ENCODE measurements at regions of chr20 and their contacts with region 1.

Region 1: DNA sequence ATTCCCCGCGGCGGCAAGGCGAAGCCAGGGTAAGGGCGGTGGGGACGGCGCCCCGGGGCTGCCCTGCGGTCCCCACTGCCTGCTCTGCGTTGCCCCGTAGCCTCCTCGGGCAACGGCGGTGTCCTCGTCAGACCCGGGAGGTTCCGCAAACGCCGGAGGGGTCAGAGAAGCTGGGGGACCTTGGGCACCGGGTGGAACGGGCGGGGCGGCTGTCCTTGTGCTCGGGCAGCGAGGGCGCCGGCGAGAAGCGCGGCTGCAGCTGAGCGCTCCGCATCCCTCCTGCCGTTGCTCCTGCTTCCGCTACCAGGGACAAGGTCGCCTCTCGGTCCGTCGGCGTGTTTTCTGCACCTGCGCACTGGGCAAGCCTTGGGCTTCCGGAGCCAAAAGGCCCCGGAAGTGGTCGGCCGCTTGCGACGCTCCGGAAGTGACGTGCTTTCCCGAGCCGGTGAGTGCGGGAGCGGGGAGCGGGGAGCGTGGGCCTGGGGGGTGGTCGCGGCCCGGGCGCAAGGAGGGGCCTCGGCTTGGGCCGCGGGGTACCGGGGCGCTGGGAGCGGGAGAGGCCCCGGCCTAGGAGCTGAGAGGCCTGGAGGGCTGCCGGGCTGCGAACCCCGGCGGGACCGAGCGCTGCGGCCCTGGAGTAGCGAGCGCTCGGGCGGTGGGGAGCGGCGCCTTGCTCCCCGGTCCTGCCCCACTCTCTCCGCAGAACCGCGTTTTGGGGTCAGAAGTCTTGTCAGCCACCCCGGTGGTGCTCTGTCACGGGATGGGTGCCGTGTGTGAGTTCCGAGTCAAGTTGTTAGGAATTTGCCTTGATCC is at the start of gene MTG2:
- DNase-seq: peak; percentile 85 to 98 (median 92)
- ATAC-seq: peak; percentile 94
- H3K4me3 ChIP-seq: peak within 1 kb of the TSS; percentile 78
- H3K4me3 Mint-ChIP-seq: peak within 1 kb of the TSS; percentile 98
- H3K27ac ChIP-seq: peak within 1 kb of the TSS; percentile 78 to 83
- H3K27ac Mint-ChIP-seq: peak within 1 kb of the TSS; percentile 97
- H3K4me1 ChIP-seq: peaks cover 22% of the 10 kb centered on the region
- H3K4me1 Mint-ChIP-seq: peaks cover 49% of the 10 kb centered on the region
- H3K27me3 ChIP-seq: no peaks in the 10 kb centered on the region
- H3K27me3 Mint-ChIP-seq: no peaks in the 10 kb centered on the region
- CTCF ChIP-seq: no peak
- total RNA-seq, gene MTG2: 9.5 to 9.9 TPM

Region 2: GRCh38 chr20:62065669-62066338 is 117.0 kb before region 1 on chr20 and contains the start of gene TAF4:
- CTCF ChIA-PET with region 1: no interaction called
- POLR2A ChIA-PET with region 1: interaction called, 8 read pairs
- intact Hi-C with region 1: loop called in 1 of 2 experiments (anchors 2 kb)
- DNase-seq: peak; percentile 58 to 95 (median 80)
- ATAC-seq: peak; percentile 74
- H3K4me3 ChIP-seq: peak within 1 kb of the TSS; percentile 77
- H3K4me3 Mint-ChIP-seq: peak within 1 kb of the TSS; percentile 96
- H3K27ac ChIP-seq: peak within 1 kb of the TSS; percentile 15 to 70
- H3K27ac Mint-ChIP-seq: peak within 1 kb of the TSS; percentile 98
- H3K4me1 ChIP-seq: peaks cover 46% of the 10 kb centered on the region
- H3K4me1 Mint-ChIP-seq: peaks cover 51% of the 10 kb centered on the region
- H3K27me3 ChIP-seq: no peaks in the 10 kb centered on the region
- H3K27me3 Mint-ChIP-seq: no peaks in the 10 kb centered on the region
- CTCF ChIP-seq: no peak
- total RNA-seq, gene TAF4: 11.1 to 12.5 TPM

Region 3: DNA sequence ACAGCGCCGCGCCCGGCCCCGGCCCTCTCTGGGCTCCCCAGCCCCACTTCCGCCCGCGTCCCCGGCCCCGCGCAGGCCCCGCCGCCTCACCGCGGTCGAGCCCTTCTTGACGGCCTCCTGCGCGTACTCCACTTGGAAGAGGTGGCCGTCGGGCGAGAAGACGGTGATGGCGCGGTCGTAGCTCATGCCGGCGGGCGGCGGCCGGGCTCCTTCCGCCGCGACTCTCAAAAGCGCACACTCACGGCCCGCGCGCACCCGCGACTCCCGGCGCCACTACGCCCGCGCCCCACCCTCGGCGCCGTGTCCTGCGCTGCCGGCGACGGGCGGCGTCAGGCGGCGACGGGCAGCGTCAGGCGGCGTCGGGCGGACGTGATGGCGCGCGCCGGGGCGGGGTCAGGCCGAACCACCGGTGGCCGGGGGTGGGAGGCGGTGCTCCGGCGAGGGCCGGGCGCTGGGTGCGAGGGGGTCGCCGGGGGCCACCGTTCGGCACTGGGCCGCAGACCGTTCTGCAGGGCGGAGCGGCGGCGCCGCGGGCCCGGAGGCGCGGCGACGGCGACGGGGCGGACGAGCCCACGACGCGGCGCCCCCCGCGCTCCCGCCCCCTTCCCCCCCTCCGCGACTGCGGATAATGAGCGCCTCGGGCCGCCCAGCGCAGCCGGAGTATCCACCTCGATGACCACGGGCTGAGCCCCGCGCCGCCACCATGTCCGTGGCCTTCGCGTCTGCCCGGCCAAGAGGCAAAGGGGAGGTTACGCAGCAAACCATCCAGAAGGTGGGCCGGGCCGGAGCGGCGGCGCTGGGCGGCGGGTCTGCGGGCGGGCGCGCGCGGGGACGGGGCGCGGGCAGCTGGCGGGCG is 39.5 kb before region 1 on chr20 and contains the starts of genes PSMA7 and SS18L1:
- CTCF ChIA-PET with region 1: no interaction called
- POLR2A ChIA-PET with region 1: interaction called, 5 read pairs
- intact Hi-C with region 1: loop called (anchors 1 to 5 kb)
- DNase-seq: peak; percentile 71 to 98 (median 83)
- ATAC-seq: peak; percentile 83
- H3K4me3 ChIP-seq: peak within 1 kb of the TSS; percentile 65
- H3K4me3 Mint-ChIP-seq: peak within 1 kb of the TSS; percentile 95
- H3K27ac ChIP-seq: peak within 1 kb of the TSS; percentile 53 to 75
- H3K27ac Mint-ChIP-seq: peak within 1 kb of the TSS; percentile 96
- H3K4me1 ChIP-seq: peaks cover 49% of the 10 kb centered on the region
- H3K4me1 Mint-ChIP-seq: peaks cover 51% of the 10 kb centered on the region
- H3K27me3 ChIP-seq: no peaks in the 10 kb centered on the region
- H3K27me3 Mint-ChIP-seq: no peaks in the 10 kb centered on the region
- CTCF ChIP-seq: no peak
- total RNA-seq, gene PSMA7: 150 to 158 TPM
- total RNA-seq, gene SS18L1: 12.8 to 13.4 TPM

Region 4: GRCh38 chr20:62237801-62238571 is 55.2 kb after region 1 on chr20 and contains the start of gene OSBPL2:
- CTCF ChIA-PET with region 1: no interaction called
- POLR2A ChIA-PET with region 1: interaction called, 7 read pairs
- intact Hi-C with region 1: loop called (anchors 2 kb)
- DNase-seq: peak; percentile 100
- ATAC-seq: peak; percentile 98
- H3K4me3 ChIP-seq: peak within 1 kb of the TSS; percentile 64
- H3K4me3 Mint-ChIP-seq: peak within 1 kb of the TSS; percentile 92
- H3K27ac ChIP-seq: peak within 1 kb of the TSS; percentile 32 to 57
- H3K27ac Mint-ChIP-seq: peak within 1 kb of the TSS; percentile 95
- H3K4me1 ChIP-seq: peaks cover 36% of the 10 kb centered on the region
- H3K4me1 Mint-ChIP-seq: peaks cover 43% of the 10 kb centered on the region
- H3K27me3 ChIP-seq: no peaks in the 10 kb centered on the region
- H3K27me3 Mint-ChIP-seq: peaks cover 9% of the 10 kb centered on the region
- CTCF ChIP-seq: no peak
- total RNA-seq, gene OSBPL2: 52.8 to 54.4 TPM

Region 5: GRCh38 chr20:62386383-62387218 is 203.8 kb after region 1 on chr20 and contains the start of gene RPS21:
- CTCF ChIA-PET with region 1: no interaction called
- POLR2A ChIA-PET with region 1: no interaction called
- intact Hi-C with region 1: loop called in 1 of 2 experiments (anchors 2 kb)
- DNase-seq: peak; percentile 89 to 97 (median 92)
- ATAC-seq: peak; percentile 87
- H3K4me3 ChIP-seq: peak within 1 kb of the TSS; percentile 91
- H3K4me3 Mint-ChIP-seq: peak within 1 kb of the TSS; percentile 95
- H3K27ac ChIP-seq: peak within 1 kb of the TSS; percentile 84 to 94
- H3K27ac Mint-ChIP-seq: peak within 1 kb of the TSS; percentile 91
- H3K4me1 ChIP-seq: peaks cover 39% of the 10 kb centered on the region
- H3K4me1 Mint-ChIP-seq: peaks cover 58% of the 10 kb centered on the region
- H3K27me3 ChIP-seq: no peaks in the 10 kb centered on the region
- H3K27me3 Mint-ChIP-seq: no peaks in the 10 kb centered on the region
- CTCF ChIP-seq: no peak
- total RNA-seq, gene RPS21: 3,015 to 3,210 TPM

Region 6: DNA sequence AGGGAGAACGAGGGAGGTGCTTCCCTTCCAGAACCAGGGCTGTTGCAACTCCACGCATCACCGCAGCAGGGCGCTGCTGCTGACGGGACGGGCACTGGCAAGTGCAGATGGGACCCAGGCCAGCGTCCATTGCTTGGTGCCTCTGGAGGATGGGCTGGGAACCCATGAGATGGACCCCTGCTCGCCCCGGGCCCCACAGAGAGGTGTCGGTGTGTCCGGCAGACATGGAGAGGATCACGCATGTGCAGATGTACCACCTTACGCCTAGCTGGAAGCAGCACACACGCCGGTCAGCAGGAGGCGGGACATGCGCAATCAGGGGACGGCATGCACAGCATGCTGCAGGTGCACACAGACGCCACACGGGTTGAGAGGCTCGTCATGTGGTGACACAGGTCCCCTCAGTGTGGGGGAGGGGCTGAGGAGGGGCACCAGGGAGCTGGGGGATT is 218.5 kb after region 1 on chr20:
- CTCF ChIA-PET with region 1: no interaction called
- POLR2A ChIA-PET with region 1: no interaction called
- intact Hi-C with region 1: loop called in 1 of 2 experiments (anchors 5 kb)
- DNase-seq: no peak
- ATAC-seq: no peak
- H3K4me3 ChIP-seq: no peak overlapping the region
- H3K4me3 Mint-ChIP-seq: no peak overlapping the region
- H3K27ac ChIP-seq: no peak overlapping the region
- H3K27ac Mint-ChIP-seq: no peak overlapping the region
- H3K4me1 ChIP-seq: peaks cover 18% of the 10 kb centered on the region
- H3K4me1 Mint-ChIP-seq: peaks cover 14% of the 10 kb centered on the region
- H3K27me3 ChIP-seq: no peaks in the 10 kb centered on the region
- H3K27me3 Mint-ChIP-seq: no peaks in the 10 kb centered on the region
- CTCF ChIP-seq: no peak

Region 7: DNA sequence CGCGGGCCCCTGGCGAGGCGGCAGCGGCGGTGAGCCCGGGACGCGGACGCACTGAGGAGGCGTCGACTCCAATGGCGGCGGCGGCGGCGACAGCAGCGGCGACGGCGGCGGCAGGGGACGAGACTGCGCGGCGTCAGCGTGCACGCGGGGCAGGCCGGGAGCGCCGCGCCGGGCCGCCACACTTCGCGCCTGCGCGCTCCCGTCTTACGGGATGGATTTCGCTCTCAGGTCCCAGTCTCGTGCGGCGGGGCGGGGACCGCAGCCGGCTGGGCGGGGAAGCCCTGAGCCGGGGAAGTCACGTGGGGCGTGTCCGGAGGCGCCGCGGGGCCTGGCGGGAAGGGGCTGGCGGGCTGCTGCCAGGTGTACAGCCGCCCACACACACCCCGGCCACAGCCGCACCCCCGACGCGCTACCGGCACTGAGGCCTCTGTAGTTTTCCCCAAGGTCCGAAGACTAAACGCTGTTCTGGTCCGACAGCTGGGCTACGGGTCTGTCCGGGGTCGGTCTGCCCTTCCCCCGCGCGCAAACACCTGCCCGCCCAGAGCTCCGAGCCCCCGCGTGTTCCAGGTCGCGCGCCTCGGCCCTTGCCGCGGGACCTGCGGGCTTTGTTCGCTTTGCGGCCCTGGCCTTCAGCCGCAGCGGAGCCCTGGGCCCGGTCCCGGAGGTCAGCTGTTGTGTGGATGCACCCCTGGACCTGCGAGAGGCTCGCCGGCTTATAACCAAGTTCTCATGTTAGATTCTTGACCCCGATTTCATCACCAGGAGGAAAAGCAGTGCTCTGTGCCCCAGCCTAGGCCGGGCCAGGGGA is 1033.4 kb after region 1 on chr20 and contains the start of gene YTHDF1:
- CTCF ChIA-PET with region 1: no interaction called
- POLR2A ChIA-PET with region 1: no interaction called
- intact Hi-C with region 1: loop called in 1 of 2 experiments (anchors 5 kb)
- DNase-seq: peak; percentile 86 to 98 (median 94)
- ATAC-seq: peak; percentile 95
- H3K4me3 ChIP-seq: peak within 1 kb of the TSS; percentile 75
- H3K4me3 Mint-ChIP-seq: peak within 1 kb of the TSS; percentile 93
- H3K27ac ChIP-seq: peak within 1 kb of the TSS; percentile 44 to 70
- H3K27ac Mint-ChIP-seq: peak within 1 kb of the TSS; percentile 92
- H3K4me1 ChIP-seq: peaks cover 47% of the 10 kb centered on the region
- H3K4me1 Mint-ChIP-seq: peaks cover 48% of the 10 kb centered on the region
- H3K27me3 ChIP-seq: no peaks in the 10 kb centered on the region
- H3K27me3 Mint-ChIP-seq: no peaks in the 10 kb centered on the region
- CTCF ChIP-seq: no peak
- total RNA-seq, gene YTHDF1: 43.7 to 44.1 TPM